SK-N-SH (cell line): ENCODE measurements at regions of chr10 and their contacts with region 1.

Region 1: GRCh38 chr10:69914398-69915214 is 112.9 kb downstream of the COL13A1 start:
- DNase-seq: peak; percentile 87
- H3K4me3 ChIP-seq: no peak overlapping the region; a peak in 1 of 4 replicates
- H3K27ac ChIP-seq: no peak overlapping the region
- H3K4me1 ChIP-seq: peaks cover 0 to 5% of the 10 kb centered on the region in 2 experiments; a peak in 1 of 4 replicates
- H3K27me3 ChIP-seq: no peaks in the 10 kb centered on the region
- CTCF ChIP-seq: peak; percentile 90
- EP300 ChIP-seq: no peak
- RAD21 ChIP-seq: peak; percentile 94

Region 2: GRCh38 chr10:69639291-69640195 is 275.1 kb before region 1 on chr10:
- CTCF ChIA-PET with region 1: interaction called, 94 read pairs
- POLR2A ChIA-PET with region 1: no interaction called
- DNase-seq: peak; percentile 81
- H3K4me3 ChIP-seq: peak overlapping the region in 1 of 2 experiments; percentile 48; a peak in 1 of 4 replicates
- H3K27ac ChIP-seq: no peak overlapping the region
- H3K4me1 ChIP-seq: no peaks in the 10 kb centered on the region; a peak in 1 of 4 replicates
- H3K27me3 ChIP-seq: no peaks in the 10 kb centered on the region
- CTCF ChIP-seq: peak; percentile 93
- EP300 ChIP-seq: no peak
- RAD21 ChIP-seq: peak; percentile 90

Region 3: GRCh38 chr10:69733791-69734261 is 180.8 kb before region 1 on chr10:
- CTCF ChIA-PET with region 1: interaction called, 30 read pairs
- POLR2A ChIA-PET with region 1: no interaction called
- DNase-seq: no peak
- H3K4me3 ChIP-seq: no peak overlapping the region
- H3K27ac ChIP-seq: no peak overlapping the region
- H3K4me1 ChIP-seq: peaks cover under 1 to 41% of the 10 kb centered on the region in 2 experiments; a peak in 2 of 4 replicates
- H3K27me3 ChIP-seq: no peaks in the 10 kb centered on the region
- CTCF ChIP-seq: no peak
- EP300 ChIP-seq: no peak
- RAD21 ChIP-seq: no peak

Region 4: GRCh38 chr10:69800109-69800508 is 114.5 kb before region 1 on chr10:
- CTCF ChIA-PET with region 1: interaction called, 160 read pairs
- POLR2A ChIA-PET with region 1: no interaction called
- DNase-seq: peak; percentile 73
- H3K4me3 ChIP-seq: no peak overlapping the region; a peak in 1 of 4 replicates
- H3K27ac ChIP-seq: no peak overlapping the region
- H3K4me1 ChIP-seq: peaks cover 0 to 10% of the 10 kb centered on the region in 2 experiments; a peak in 2 of 4 replicates
- H3K27me3 ChIP-seq: 0 out of 2 replicates have a peak, but pooled peaks cover 10% of the 10 kb centered on the region
- CTCF ChIP-seq: peak; percentile 79
- EP300 ChIP-seq: no peak
- RAD21 ChIP-seq: peak; percentile 77

Region 5: GRCh38 chr10:69878038-69878437 is 36.6 kb before region 1 on chr10:
- CTCF ChIA-PET with region 1: interaction called, 21 read pairs
- POLR2A ChIA-PET with region 1: no interaction called
- DNase-seq: no peak
- H3K4me3 ChIP-seq: no peak overlapping the region
- H3K27ac ChIP-seq: no peak overlapping the region
- H3K4me1 ChIP-seq: peaks cover 2 to 13% of the 10 kb centered on the region in 2 experiments; a peak in 2 of 4 replicates
- H3K27me3 ChIP-seq: no peaks in the 10 kb centered on the region
- CTCF ChIP-seq: no peak
- EP300 ChIP-seq: no peak
- RAD21 ChIP-seq: no peak

Region 6: GRCh38 chr10:69925111-69925510 is 10.5 kb after region 1 on chr10:
- CTCF ChIA-PET with region 1: interaction called, 70 read pairs
- POLR2A ChIA-PET with region 1: no interaction called
- DNase-seq: no peak
- H3K4me3 ChIP-seq: no peak overlapping the region
- H3K27ac ChIP-seq: no peak overlapping the region
- H3K4me1 ChIP-seq: no peaks in the 10 kb centered on the region
- H3K27me3 ChIP-seq: no peaks in the 10 kb centered on the region
- CTCF ChIP-seq: no peak
- EP300 ChIP-seq: no peak
- RAD21 ChIP-seq: no peak

Region 7: DNA sequence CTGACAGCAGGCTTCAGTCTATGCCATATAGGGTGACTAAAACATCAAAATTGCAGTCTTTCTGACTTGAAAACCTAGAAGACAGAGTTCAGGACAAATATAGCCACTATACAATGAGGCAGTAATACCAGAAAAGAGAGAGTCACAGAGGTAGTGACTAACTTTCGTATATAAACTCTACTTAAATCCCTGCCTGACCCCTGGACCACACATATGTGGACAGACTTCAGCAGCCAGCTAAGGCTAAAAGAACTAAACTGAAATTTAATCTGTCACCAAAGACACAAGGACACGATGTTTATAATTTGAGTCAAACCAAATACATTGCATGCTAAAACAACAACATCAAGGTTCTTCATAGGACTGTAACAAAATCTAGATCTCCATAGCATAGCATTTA is 73.5 kb after region 1 on chr10:
- CTCF ChIA-PET with region 1: no interaction called
- POLR2A ChIA-PET with region 1: no interaction called
- DNase-seq: no peak
- H3K4me3 ChIP-seq: no peak overlapping the region
- H3K27ac ChIP-seq: no peak overlapping the region
- H3K4me1 ChIP-seq: no peaks in the 10 kb centered on the region
- H3K27me3 ChIP-seq: no peaks in the 10 kb centered on the region; the same call in none of the 2 replicates
- CTCF ChIP-seq: no peak
- EP300 ChIP-seq: no peak
- RAD21 ChIP-seq: no peak

Region 8: GRCh38 chr10:70093335-70093944 is 178.8 kb after region 1 on chr10:
- CTCF ChIA-PET with region 1: no interaction called
- POLR2A ChIA-PET with region 1: no interaction called
- DNase-seq: no peak
- H3K4me3 ChIP-seq: no peak overlapping the region
- H3K27ac ChIP-seq: no peak overlapping the region
- H3K4me1 ChIP-seq: no peaks in the 10 kb centered on the region
- H3K27me3 ChIP-seq: no peaks in the 10 kb centered on the region
- CTCF ChIP-seq: no peak
- EP300 ChIP-seq: no peak
- RAD21 ChIP-seq: no peak